IMR-90 (cell line): ENCODE measurements at regions of chr12 and their contacts with region 1.

Region 1: DNA sequence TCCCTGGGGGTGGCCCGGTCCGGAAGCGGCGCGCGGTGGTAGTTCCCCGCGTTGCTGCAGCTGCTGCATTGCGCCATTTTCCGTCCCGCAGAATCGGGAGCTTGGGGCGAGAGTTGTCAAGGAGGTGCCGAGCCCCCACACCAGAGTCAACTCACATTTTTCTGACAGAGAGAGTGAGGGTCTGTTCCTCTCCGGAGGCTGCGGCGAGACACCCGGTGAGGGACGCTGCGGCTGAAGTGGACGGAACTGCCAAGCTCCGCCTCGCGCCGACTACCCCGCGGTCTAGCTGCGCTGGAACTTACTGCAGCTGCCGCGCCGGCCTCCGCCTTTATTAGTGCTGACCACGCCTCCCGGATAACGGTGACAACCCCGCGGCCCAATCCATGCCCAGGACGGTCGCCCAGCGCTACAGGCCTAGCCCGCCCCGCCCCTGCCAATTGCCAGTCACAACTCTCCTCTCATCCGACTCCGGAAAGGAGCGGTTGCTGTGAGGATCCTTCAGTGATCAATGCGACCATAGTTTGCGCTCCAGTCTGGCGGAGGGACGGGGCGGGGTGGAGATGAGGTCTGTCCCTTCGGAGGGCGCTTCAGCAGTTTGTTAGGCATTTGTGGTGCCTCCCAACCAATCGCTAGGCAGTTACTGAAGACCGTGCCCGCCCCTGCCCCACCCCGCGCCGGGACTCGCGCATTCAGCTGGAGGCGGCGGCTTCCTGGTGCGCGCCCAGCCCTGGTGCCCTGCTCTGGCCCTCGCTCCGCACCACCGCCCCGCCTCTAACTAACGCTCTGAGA is at the start of gene VAMP1:
- DNase-seq: peak; percentile 96
- ATAC-seq: peak; percentile 96
- H3K4me3 ChIP-seq: peak within 1 kb of the TSS; percentile 78
- H3K27ac ChIP-seq: peak within 1 kb of the TSS; percentile 89
- H3K4me1 ChIP-seq: peaks cover 4% of the 10 kb centered on the region
- H3K27me3 ChIP-seq: no peaks in the 10 kb centered on the region
- CTCF ChIP-seq: no peak
- POLR2A ChIP-seq: peak; percentile 99
- RAD21 ChIP-seq: no peak
- total RNA-seq, gene VAMP1: 7.2 and 7.5 TPM in 2 replicates

Region 2: DNA sequence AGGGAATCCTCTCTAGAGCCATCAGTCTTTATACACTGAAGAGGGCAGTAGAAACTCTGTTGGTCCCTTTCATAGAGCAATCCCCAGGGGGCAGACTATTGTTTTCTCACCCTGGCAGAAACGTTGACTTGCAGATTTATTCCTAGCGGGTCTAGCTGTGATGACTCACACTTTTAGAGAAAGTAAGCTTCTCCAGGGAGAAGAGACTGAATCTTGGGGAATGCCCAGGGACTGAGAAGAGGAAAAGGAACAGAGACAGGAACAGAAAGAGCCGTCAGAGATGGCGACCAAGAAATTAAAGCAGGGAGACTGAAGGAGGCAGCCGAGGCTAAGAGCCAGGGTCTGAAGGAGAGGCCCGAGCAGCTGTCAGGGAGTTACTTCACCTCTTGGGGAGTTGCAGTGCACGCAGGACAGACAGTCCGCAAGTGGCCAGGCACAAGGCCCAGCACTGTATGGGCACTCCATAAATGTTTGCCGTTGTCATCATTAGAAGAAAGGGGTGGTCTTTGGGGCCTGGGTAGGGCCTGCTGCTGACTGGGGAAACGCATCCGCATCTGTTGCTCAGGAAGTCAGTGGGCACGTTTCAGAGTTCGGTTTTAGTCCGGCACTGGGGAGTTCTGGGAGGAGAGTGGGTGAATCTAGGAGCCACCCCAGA is 147.1 kb before region 1 on chr12:
- CTCF ChIA-PET with region 1: interaction called, 5 read pairs
- POLR2A ChIA-PET with region 1: no interaction called
- dilution Hi-C with region 1: no loop called
- in situ Hi-C with region 1: no loop called
- intact Hi-C with region 1: loop called (anchors 1 kb)
- DNase-seq: peak; percentile 94
- ATAC-seq: peak; percentile 64
- H3K4me3 ChIP-seq: no peak overlapping the region
- H3K27ac ChIP-seq: peak overlapping the region; percentile 48
- H3K4me1 ChIP-seq: peaks cover 25% of the 10 kb centered on the region
- H3K27me3 ChIP-seq: no peaks in the 10 kb centered on the region
- CTCF ChIP-seq: peak; percentile 84
- POLR2A ChIP-seq: no peak; the same call in 1 of the 2 replicates
- RAD21 ChIP-seq: peak; percentile 58

Region 3: DNA sequence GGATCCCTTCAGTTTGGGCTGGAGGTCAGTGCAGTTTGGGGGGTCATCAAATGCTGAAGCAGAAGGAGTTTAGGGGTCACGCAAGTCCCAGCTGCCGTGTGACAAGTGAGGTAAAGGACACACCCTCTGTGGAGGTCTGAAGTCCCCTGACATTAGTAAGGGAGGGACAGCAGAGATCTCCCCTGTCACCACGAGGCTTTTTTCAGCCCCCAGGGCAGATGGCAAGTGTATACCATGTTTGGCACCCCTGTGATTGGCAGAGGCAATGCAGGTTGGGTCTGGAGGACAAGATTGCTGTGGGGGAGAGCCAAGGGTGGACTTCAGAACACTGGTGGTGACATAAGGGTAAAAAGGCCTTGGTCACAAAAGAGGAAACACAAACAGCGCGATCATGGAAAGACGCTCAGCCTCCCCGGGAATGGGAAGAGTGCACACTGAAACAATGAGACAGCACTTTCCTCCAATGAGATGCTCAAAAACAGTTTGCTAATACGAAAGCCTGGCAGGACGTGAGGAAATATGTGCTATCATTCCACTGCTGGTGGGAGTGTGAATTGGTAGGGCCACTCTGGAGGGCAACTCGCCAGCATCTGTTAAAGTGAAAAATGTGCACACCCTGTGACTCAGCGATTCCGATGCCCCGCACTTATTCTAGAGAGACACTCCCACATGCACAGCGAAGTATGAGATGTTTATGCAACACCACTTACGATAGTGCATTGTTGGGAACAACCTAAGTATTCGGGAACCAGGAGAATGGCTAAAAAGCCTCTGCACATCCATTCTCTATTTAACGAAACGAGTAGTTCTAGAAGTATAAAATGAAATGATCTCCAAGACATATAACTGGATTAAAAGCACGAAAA is 40.2 kb before region 1 on chr12:
- CTCF ChIA-PET with region 1: interaction called, 4 read pairs
- POLR2A ChIA-PET with region 1: no interaction called
- dilution Hi-C with region 1: no loop called
- in situ Hi-C with region 1: no loop called
- intact Hi-C with region 1: loop called (anchors 2 kb)
- DNase-seq: peak; percentile 96
- ATAC-seq: peak; percentile 92
- H3K4me3 ChIP-seq: peak overlapping the region; percentile 1; the same call in 1 of the 2 replicates
- H3K27ac ChIP-seq: peak overlapping the region; percentile 87
- H3K4me1 ChIP-seq: peaks cover 12% of the 10 kb centered on the region
- H3K27me3 ChIP-seq: no peaks in the 10 kb centered on the region
- CTCF ChIP-seq: no peak
- POLR2A ChIP-seq: peak; percentile 52; the same call in 1 of the 2 replicates
- RAD21 ChIP-seq: no peak

Region 4: DNA sequence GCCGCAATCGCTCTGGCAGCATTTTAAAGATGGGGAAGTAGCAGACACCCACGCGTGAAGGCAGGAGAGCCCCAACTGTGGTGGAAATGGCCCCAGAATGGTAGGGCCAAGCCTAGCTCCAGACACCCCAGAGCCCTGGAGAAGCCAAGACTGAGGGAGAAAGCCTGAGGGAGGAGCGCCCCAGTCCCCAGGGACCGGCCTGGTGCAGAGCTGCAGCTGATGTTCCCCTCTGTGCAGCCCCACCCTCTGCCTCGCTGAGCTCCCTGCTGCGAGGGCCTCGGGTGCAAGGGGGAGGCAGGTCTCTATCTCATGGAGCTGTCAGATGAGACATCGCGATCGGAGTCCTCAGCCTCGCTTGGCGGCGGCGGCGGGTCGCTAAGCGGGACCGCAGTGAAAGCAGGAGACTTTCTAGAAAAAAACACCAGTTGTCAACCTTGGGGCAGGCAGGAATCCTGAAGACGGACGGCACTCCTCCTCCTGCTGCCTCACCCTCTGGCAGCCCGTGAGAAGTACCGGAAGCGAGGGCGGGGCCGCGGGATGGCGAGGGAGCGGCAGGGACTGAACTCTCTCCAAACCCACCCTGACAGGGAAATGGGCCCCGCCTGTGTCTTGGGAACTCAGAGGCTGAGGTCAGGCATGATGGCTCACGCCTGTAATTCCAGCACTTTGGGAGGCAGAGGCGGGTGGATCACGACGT is 69.8 kb after region 1 on chr12:
- CTCF ChIA-PET with region 1: no interaction called
- POLR2A ChIA-PET with region 1: interaction called, 8 read pairs
- dilution Hi-C with region 1: no loop called
- in situ Hi-C with region 1: no loop called
- intact Hi-C with region 1: loop called (anchors 2 kb)
- DNase-seq: peak; percentile 93
- ATAC-seq: peak; percentile 70
- H3K4me3 ChIP-seq: no peak overlapping the region
- H3K27ac ChIP-seq: peak overlapping the region; percentile 65
- H3K4me1 ChIP-seq: peaks cover 11% of the 10 kb centered on the region; the same call in 1 of the 2 replicates
- H3K27me3 ChIP-seq: no peaks in the 10 kb centered on the region
- CTCF ChIP-seq: no peak; the same call in 1 of the 2 replicates
- POLR2A ChIP-seq: no peak
- RAD21 ChIP-seq: no peak

Region 5: GRCh38 chr12:6653987-6654386 is 183.4 kb after region 1 on chr12:
- CTCF ChIA-PET with region 1: no interaction called
- POLR2A ChIA-PET with region 1: no interaction called
- dilution Hi-C with region 1: no loop called
- in situ Hi-C with region 1: no loop called
- intact Hi-C with region 1: no loop called
- DNase-seq: no peak
- ATAC-seq: no peak
- H3K4me3 ChIP-seq: no peak overlapping the region
- H3K27ac ChIP-seq: no peak overlapping the region
- H3K4me1 ChIP-seq: no peaks in the 10 kb centered on the region
- H3K27me3 ChIP-seq: no peaks in the 10 kb centered on the region
- CTCF ChIP-seq: no peak
- POLR2A ChIP-seq: no peak
- RAD21 ChIP-seq: no peak